Sciatic nerve (tissue), 2 donors: ENCODE measurements at regions of chr15 and their contacts with region 1.

Region 1: GRCh38 chr15:98668566-98669308 is 20.4 kb downstream of the IGF1R start:
- DNase-seq: no peak
- ATAC-seq: no peak

Region 2: DNA sequence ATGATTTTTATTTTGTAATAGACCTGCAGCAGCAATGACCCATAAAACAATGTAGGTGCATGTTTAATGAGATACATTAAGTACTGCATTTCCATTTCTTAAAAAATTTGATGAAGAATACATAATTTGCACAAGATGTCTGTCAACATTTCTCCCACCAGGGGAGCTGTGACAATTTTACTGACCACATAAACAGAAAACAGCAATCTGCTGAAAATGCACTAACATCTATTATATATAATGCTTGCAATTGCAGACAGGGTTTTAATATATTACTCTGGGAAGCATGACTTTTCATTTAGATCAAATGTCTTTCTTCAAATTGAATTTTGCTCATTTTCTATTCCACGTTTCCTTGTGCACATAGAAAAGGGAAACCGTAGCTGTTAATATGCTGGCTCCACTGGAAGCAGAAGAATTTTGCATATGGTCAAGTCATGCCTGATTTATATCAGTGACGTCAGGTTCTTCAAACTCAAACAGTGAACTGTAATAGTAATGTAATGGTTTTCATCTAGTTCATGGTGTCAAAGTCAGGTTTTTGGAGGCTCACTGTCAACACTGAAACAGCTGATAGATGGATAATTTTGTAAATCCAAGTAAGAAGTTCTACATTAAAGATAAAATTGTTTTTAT is 100.2 kb before region 1 on chr15:
- intact Hi-C with region 1: no loop called
- DNase-seq: no peak
- ATAC-seq: no peak

Region 3: GRCh38 chr15:98700519-98700918 is 31.8 kb after region 1 on chr15:
- intact Hi-C with region 1: no loop called
- DNase-seq: no peak
- ATAC-seq: no peak

Region 4: DNA sequence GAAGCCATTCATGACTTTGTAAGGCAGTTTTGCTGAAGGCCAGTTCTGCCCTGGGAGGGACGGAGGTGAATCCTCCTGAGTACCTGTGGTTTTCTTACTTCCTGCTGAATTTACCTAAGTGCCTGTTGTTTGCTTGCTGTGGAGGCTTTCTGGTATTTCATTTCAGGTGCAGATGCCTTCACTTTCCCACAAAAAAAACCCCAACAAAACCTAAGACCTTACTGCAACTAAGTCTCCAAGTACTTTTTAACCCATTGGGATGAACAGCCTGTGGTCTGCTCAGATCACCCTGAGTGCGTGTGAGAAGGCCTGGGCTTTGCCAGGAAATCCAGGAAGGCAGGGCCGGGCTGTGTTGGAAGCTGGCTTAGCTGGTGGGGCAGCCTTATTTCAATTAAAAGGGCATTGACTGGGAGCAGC is 44.9 kb after region 1 on chr15:
- intact Hi-C with region 1: loop called (anchors 10 kb)
- DNase-seq: no peak
- ATAC-seq: peak; percentile 52

Region 5: DNA sequence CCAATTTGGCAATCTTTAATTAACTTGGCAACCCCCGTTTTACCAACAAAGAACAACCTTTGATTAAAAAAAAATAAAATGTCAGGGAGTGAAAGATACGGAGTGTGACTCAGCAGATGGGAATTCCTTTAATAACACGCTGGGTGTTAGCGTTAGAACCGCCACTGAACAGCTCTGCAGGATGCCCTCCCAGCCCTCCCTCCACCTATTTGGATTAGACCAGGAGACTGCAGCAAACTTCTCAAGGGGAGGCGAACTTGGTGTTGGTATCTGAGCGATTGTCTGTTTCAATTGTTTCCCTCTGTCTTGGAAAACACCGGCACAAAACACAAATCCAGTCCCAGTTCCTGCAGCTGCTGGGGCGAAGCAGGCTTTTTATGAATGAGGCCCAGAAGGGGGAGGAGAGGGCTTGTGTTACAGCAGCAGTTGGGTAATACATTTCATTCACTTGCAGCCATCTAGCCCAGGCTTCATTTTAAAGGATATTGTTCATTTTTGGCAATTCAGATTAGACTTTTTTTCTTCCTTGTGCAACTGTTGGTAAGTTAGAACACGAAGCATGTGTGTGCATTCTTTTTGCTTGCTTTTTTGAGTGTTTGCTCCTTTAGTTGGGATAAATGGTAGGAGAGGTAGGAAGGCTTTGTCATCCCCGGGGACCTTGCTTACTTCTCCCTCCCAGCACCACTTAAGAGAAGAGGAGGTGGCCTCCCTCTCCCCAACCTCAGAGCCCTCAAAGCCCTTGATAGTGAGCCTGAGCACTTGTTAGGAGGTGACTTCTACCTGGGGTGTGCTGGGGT is 131.9 kb after region 1 on chr15:
- intact Hi-C with region 1: no loop called
- DNase-seq: no peak
- ATAC-seq: peak; percentile 93

Region 6: DNA sequence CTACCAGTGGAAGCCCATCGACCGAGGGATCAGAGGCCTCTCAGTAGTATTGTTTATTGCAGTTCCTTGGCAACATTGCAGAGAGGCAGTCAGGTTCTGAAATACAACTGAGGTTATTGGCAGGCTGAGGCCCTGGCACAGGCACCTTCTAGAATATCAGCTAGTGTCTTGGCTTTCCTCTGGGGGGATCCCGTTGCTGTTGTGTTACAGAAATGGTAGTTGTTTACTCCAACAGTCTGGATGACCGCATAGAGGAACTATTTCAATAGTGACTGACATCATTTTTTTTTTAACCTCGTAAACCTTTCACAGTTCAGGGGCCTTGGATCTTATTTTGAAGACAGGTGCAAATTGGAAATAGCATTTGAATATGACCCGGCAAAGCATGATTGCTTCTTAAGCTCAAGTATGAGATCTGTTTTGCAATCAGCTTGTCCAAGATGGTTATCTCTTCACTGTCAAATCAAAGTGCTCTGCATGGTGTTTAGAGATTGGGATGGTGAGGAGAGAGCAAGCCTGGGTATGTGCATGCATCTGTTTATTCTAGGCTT is 274.9 kb after region 1 on chr15:
- intact Hi-C with region 1: no loop called
- DNase-seq: no peak
- ATAC-seq: peak; percentile 73